ENCODE measurements at regions of chr6 and their contacts with region 1.

Region 1: DNA sequence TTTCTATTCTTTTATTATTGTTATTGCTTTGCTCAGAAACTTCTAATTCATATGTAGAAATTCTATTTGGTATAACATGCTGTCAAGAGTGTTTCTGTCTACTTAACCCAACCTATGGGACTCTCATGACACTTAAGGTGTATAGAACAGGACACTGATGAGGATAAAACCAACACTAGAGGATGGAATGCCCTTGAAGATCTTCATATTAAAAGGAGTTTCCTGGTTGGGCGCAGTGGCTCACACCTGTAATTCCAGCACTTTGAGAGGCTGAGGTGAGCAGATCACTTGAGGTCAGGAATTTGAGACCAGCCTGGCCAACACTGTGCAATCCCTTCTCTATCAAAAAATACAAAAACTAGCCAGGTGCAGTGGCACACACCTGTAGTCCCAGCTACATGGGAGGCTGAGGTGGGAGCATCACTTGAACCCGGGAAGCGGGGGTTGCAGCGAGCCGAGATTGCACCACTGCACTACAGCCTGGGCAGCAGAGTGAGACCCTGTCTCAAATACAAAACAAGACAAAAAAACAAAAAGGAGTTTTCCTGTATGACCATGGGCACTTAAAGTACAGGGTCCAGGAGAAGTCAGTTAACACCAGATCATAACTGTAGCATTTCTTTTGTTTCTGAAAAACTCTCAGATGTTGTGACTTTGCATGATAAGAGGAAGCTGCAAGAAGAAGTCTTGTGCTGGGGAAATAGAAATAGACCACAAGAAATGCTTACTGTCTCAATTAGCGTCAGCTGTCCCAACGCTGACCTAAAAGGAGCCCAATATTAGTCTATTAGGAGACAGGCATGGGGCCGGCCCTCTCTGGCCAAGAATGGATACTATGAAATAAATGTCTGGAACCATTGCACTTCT is 38.9 kb upstream of the CD2AP start:
- H3K4me3 Mint-ChIP-seq: no peak overlapping the region
- H3K27ac Mint-ChIP-seq: no peak overlapping the region
- H3K4me1 Mint-ChIP-seq: peaks cover 34% of the 10 kb centered on the region
- H3K27me3 Mint-ChIP-seq: peaks cover 68% of the 10 kb centered on the region

Region 2: DNA sequence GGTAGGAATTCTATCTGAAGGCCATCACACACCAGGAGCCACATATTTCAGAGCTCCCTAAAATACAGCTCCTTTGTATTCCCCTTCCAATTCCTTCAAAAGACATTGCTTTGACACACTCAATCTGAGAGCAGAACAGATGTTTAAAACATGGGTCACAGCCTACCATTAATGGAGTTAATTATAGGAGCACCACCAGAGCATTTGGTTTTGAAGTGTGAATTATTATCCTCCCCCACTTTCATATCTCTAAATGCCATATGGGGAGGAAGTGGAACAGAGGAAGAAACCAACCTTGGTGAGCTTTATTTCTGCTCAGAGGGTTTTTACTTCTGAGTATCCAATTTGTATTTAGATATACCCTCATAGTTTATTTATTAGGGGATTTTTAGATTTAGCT is 78.3 kb before region 1 on chr6:
- intact Hi-C with region 1: loop called (anchors 5 kb)
- H3K4me3 Mint-ChIP-seq: no peak overlapping the region
- H3K27ac Mint-ChIP-seq: no peak overlapping the region
- H3K4me1 Mint-ChIP-seq: peaks cover 28% of the 10 kb centered on the region
- H3K27me3 Mint-ChIP-seq: peaks cover 49% of the 10 kb centered on the region

Region 3: GRCh38 chr6:47455534-47456209 is 17.0 kb after region 1 on chr6:
- intact Hi-C with region 1: loop called (anchors 2 kb)
- H3K4me3 Mint-ChIP-seq: no peak overlapping the region
- H3K27ac Mint-ChIP-seq: no peak overlapping the region
- H3K4me1 Mint-ChIP-seq: peaks cover under 1% of the 10 kb centered on the region
- H3K27me3 Mint-ChIP-seq: peaks cover 46% of the 10 kb centered on the region